ENCODE measurements at regions of chr12 and their contacts with region 1.

Region 1: DNA sequence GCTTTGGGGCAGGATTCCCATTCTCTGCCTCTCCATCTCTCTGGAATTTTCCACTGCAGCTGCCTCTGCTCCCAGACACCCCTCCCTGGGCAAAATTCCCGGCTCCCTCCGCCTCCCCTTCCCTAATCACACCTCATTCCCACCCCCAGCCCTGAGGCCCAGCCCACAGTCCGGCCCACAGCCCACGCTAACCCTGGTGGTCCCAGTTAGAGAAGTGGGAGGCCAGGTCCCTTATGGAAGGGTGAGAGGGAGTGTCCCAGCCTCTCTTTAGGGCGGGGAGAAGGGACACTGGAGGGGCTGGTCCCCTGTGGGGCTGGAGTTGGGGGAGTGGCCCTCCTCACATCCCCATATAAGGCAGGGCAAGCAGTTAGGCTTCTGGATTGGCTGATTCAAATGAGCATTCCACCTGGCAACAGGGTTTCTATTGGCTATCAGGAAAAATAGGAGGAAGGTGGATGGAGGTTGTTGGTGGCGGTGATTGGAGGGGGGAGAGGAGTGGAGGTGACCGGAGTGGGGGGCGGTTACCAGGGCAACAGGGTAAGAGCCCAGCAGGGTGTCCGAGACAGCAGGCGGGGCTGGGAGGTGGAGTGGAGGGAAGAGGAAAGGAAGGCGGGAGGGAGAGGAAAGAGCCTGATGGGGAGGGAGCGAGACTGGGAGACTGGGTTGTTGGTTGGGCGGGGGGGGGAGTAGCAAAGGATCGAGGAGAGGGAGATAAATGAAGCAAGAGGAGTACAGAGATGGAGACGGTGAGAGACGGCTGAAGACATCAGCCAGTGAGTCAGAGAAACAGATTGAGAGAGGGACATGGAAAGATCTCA is 1.9 kb upstream of the PTMS start:
- DNase-seq: peak; percentile 98
- H3K4me3 ChIP-seq: peak overlapping the region; percentile 49
- H3K27ac ChIP-seq: peak overlapping the region; percentile 94
- H3K27me3 ChIP-seq: no peaks in the 10 kb centered on the region
- CTCF ChIP-seq: no peak

Region 2: GRCh38 chr12:6723607-6724396 is 40.4 kb before region 1 on chr12 and contains the start of gene COPS7A:
- CTCF ChIA-PET with region 1: interaction called, 12 read pairs
- POLR2A ChIA-PET with region 1: interaction called, 13 read pairs
- DNase-seq: peak; percentile 91
- H3K4me3 ChIP-seq: peak within 1 kb of the TSS; percentile 62
- H3K27ac ChIP-seq: peak within 1 kb of the TSS; percentile 92
- H3K27me3 ChIP-seq: no peaks in the 10 kb centered on the region
- CTCF ChIP-seq: no peak
- polyA plus RNA-seq, gene COPS7A: 93.2 and 104 TPM in 2 replicates

Region 3: DNA sequence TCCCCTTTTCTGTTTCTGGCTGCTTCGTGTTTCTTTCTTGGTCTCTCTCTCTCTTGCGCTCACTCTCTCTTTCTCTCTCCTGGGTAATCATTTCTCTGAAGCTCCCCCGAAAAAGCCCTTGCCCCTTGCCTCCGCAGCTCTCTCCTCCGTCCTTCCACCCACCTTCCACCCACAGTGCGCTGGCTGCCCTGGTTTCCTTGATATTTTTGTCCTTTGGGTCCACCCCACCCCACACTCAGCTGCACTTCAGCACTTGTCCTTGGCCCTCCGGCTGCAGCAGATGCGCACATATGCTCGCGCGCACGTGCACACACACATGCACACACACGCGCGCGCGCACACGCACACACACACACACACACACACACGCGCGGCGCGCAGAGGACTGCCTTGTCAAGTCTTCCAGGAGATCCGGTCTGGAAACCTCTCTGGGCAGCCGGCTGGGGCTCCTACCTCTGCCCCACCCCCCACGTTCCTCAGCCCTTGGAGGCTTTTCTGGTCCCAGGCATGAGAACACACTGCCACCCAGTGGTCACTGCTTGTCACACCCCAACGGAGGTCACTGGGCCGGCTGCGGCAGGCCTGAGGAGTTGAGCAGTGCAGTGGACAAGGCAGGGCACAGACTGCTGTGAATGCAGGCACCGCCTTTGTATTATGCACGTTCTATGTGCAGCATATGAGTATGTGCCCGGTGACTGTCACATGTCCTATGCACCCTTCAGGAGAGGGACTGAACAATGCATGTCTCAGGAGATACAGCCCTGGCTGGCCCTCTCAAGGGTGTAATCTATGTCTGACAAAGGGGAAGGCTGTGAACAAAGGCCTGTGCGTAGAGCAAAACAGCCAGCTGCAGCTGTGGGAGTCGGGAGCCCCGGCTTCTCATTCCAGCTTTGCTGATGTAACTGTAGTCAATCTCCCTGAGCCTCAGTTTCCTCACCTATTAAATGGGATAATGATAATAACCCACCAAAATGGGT is 14.6 kb after region 1 on chr12:
- CTCF ChIA-PET with region 1: interaction called, 42 read pairs
- POLR2A ChIA-PET with region 1: interaction called, 33 read pairs
- DNase-seq: peak; percentile 85
- H3K4me3 ChIP-seq: peak overlapping the region; percentile 55
- H3K27ac ChIP-seq: peak overlapping the region; percentile 39
- H3K27me3 ChIP-seq: no peaks in the 10 kb centered on the region
- CTCF ChIP-seq: peak; percentile 92

Region 4: GRCh38 chr12:6825398-6826124 is 61.3 kb after region 1 on chr12:
- CTCF ChIA-PET with region 1: interaction called, 11 read pairs
- POLR2A ChIA-PET with region 1: interaction called, 10 read pairs
- DNase-seq: peak; percentile 60
- H3K4me3 ChIP-seq: peak overlapping the region; percentile 36
- H3K27ac ChIP-seq: no peak overlapping the region
- H3K27me3 ChIP-seq: no peaks in the 10 kb centered on the region
- CTCF ChIP-seq: peak; percentile 96

Region 5: DNA sequence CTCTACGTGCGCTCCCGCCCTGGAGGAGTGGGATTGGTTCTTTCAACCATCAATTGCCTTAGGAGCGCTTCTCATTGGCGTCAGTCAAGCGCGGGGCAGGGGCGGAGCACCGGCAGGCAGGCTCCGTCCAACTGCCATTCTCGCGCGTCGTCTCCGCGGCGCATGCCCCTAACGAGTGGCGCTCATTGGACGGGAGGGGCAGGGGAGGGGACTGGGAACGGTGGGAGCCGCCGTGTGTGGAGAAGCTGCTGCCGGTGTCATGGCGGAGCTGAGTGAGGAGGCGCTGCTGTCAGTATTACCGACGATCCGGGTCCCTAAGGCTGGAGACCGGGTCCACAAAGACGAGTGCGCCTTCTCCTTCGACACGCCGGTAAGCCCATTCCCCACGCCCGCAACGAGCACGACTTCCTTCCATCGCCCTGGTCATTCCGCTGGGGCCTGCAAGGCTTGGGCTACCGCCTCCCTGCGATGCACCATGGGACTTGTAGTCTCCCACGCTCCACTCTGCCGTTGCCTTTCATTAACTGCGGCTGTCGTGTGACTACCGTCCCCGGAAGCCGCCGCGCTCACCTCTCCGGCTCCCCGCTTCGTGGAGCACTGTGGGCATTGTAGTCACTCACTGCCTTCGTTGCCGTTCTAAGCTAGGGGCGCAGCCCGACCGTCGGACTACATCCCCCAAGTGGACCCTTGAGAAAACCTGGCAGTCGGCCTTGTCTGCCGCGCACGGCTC is 87.9 kb after region 1 on chr12 and contains the start of gene USP5:
- CTCF ChIA-PET with region 1: interaction called, 3 read pairs
- POLR2A ChIA-PET with region 1: interaction called, 17 read pairs
- DNase-seq: peak; percentile 99
- H3K4me3 ChIP-seq: peak within 1 kb of the TSS; percentile 97
- H3K27ac ChIP-seq: peak within 1 kb of the TSS; percentile 92
- H3K27me3 ChIP-seq: no peaks in the 10 kb centered on the region
- CTCF ChIP-seq: no peak; the same call in 1 of the 2 replicates
- polyA plus RNA-seq, gene USP5: 47.1 and 54.8 TPM in 2 replicates

Measured in AG04450 (cell line).